Naive thymus-derived CD4-positive, alpha-beta T cell (primary cell): ENCODE measurements at regions of chrX and their contacts with region 1.

Region 1: DNA sequence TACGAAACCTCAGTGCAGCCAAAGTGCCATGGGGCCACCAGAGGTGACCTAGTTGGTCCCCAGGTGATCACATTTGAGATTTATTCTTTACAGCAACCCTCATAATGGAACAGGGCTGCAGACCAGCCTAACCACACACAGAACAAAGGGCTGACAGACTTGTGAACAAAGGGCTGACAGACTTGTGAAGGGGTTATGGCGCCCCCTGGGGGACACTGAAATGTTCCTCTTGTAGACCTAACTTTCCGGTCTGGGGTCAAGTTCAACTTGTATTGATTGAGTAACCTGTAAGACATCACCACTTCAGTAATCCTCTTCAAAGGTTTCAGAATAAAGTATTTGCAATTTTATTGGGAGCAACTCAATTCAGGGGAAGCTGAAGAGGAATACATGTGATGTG is 175.9 kb upstream of the RPS6KA3 start:
- DNase-seq: peak; percentile 59 to 84 (median 77)
- ATAC-seq: peak; percentile 96
- H3K4me3 ChIP-seq: no peak overlapping the region
- H3K4me3 Mint-ChIP-seq: peak overlapping the region in 2 of 10 donors; percentile 1 to 39
- H3K27ac ChIP-seq: no peak overlapping the region
- H3K27ac Mint-ChIP-seq: no peak overlapping the region
- H3K4me1 ChIP-seq: peaks cover 45 to 46% of the 10 kb centered on the region in 2 donors
- H3K4me1 Mint-ChIP-seq: peaks cover 12 to 53% (median 45%) of the 10 kb centered on the region in 7 donors
- H3K27me3 ChIP-seq: no peaks in the 10 kb centered on the region
- H3K27me3 Mint-ChIP-seq: peaks cover 0 to 7% (median 0%) of the 10 kb centered on the region in 5 donors

Region 2: GRCh38 chrX:20141281-20142220 is 301.0 kb before region 1 on chrX and contains the start of gene EIF1AX:
- CTCF ChIA-PET with region 1: no interaction called
- POLR2A ChIA-PET with region 1: no interaction called
- intact Hi-C with region 1: loop called (anchors 5 to 10 kb)
- DNase-seq: peak; percentile 82 to 100 (median 98)
- ATAC-seq: peak; percentile 99
- H3K4me3 ChIP-seq: peak within 1 kb of the TSS; percentile 84
- H3K4me3 Mint-ChIP-seq: peak within 1 kb of the TSS; percentile 80 to 96 (median 88)
- H3K27ac ChIP-seq: peak within 1 kb of the TSS; percentile 93
- H3K27ac Mint-ChIP-seq: peak within 1 kb of the TSS; percentile 68 to 97 (median 89)
- H3K4me1 ChIP-seq: peaks cover 8 to 13% of the 10 kb centered on the region in 2 donors
- H3K4me1 Mint-ChIP-seq: peaks cover 4 to 42% (median 27%) of the 10 kb centered on the region in 7 donors
- H3K27me3 ChIP-seq: no peaks in the 10 kb centered on the region
- H3K27me3 Mint-ChIP-seq: no peaks in the 10 kb centered on the region
- total RNA-seq, gene EIF1AX: 40.2 to 67.5 (median 51.6) TPM

Region 3: DNA sequence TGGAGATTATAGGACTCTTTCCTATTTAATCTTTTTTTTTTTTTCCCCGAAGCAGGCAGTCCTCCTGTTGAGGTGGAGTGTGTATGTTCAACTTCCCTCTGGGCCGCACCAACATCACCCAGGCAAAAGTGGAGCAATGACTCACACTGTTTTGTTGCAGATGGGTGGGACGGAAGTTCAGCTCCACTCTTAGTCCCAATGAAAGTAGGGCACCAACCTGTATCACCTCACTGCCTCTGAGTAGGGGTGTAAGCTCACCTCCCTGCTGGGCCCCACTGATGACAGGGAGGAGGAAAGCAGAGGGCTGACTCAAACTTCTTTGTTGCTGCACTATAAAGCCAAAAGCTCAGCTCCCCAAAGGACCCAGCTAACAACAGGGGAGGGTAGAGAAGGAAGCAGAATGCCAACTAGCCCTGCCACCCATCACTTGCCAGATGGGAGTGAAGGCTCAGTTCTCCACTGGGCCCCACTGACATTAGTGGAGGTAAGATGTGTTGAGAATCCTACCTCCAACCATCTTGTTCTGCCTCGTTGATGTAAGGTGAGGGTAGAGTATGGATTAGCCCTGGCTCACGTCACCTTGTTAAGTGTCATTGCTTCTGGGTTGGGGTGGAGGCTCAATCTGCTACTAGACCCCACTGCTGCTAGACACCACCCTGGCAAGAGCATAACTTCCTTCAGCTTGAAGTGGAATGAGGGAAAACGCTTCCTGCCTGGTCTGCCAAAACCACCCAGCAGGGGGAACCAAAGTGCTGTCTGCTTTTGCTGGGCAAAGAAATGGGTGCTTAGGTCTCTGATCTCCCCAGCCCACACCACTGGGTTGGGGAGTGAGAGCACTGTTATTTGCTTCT is 190.0 kb before region 1 on chrX:
- CTCF ChIA-PET with region 1: interaction called, 5 read pairs
- POLR2A ChIA-PET with region 1: no interaction called
- intact Hi-C with region 1: loop called (anchors 1 kb)
- DNase-seq: peak; percentile 45 to 73 (median 66)
- ATAC-seq: peak; percentile 88
- H3K4me3 ChIP-seq: no peak overlapping the region
- H3K4me3 Mint-ChIP-seq: peak overlapping the region in 1 of 10 donors; percentile 51
- H3K27ac ChIP-seq: no peak overlapping the region
- H3K27ac Mint-ChIP-seq: peak overlapping the region in 5 of 9 donors; percentile 36 to 52 (median 48)
- H3K4me1 ChIP-seq: peaks cover 16 to 31% of the 10 kb centered on the region in 2 donors
- H3K4me1 Mint-ChIP-seq: peaks cover 5 to 64% (median 52%) of the 10 kb centered on the region in 7 donors
- H3K27me3 ChIP-seq: no peaks in the 10 kb centered on the region
- H3K27me3 Mint-ChIP-seq: no peaks in the 10 kb centered on the region

Region 4: GRCh38 chrX:20352935-20353336 is 89.7 kb before region 1 on chrX:
- CTCF ChIA-PET with region 1: no interaction called
- POLR2A ChIA-PET with region 1: no interaction called
- intact Hi-C with region 1: loop called in 1 of 2 experiments (anchors 1 kb)
- DNase-seq: no peak
- ATAC-seq: no peak
- H3K4me3 ChIP-seq: no peak overlapping the region
- H3K4me3 Mint-ChIP-seq: no peak overlapping the region
- H3K27ac ChIP-seq: no peak overlapping the region
- H3K27ac Mint-ChIP-seq: no peak overlapping the region
- H3K4me1 ChIP-seq: peaks cover 0 to 7% of the 10 kb centered on the region in 2 donors
- H3K4me1 Mint-ChIP-seq: peaks cover 0 to 28% (median 20%) of the 10 kb centered on the region in 7 donors
- H3K27me3 ChIP-seq: no peaks in the 10 kb centered on the region
- H3K27me3 Mint-ChIP-seq: peaks cover 0 to 5% (median 0%) of the 10 kb centered on the region in 5 donors

Region 5: GRCh38 chrX:20382518-20383297 is 59.9 kb before region 1 on chrX:
- CTCF ChIA-PET with region 1: no interaction called
- POLR2A ChIA-PET with region 1: no interaction called
- intact Hi-C with region 1: loop called (anchors 1 to 10 kb)
- DNase-seq: no peak
- ATAC-seq: no peak
- H3K4me3 ChIP-seq: no peak overlapping the region
- H3K4me3 Mint-ChIP-seq: peak overlapping the region in 8 of 10 donors; percentile 19 to 74 (median 45)
- H3K27ac ChIP-seq: no peak overlapping the region
- H3K27ac Mint-ChIP-seq: peak overlapping the region in 2 of 9 donors; percentile 6 to 42
- H3K4me1 ChIP-seq: peaks cover 0 to 3% of the 10 kb centered on the region in 2 donors
- H3K4me1 Mint-ChIP-seq: peaks cover 5 to 18% (median 10%) of the 10 kb centered on the region in 7 donors
- H3K27me3 ChIP-seq: no peaks in the 10 kb centered on the region
- H3K27me3 Mint-ChIP-seq: no peaks in the 10 kb centered on the region

Region 6: DNA sequence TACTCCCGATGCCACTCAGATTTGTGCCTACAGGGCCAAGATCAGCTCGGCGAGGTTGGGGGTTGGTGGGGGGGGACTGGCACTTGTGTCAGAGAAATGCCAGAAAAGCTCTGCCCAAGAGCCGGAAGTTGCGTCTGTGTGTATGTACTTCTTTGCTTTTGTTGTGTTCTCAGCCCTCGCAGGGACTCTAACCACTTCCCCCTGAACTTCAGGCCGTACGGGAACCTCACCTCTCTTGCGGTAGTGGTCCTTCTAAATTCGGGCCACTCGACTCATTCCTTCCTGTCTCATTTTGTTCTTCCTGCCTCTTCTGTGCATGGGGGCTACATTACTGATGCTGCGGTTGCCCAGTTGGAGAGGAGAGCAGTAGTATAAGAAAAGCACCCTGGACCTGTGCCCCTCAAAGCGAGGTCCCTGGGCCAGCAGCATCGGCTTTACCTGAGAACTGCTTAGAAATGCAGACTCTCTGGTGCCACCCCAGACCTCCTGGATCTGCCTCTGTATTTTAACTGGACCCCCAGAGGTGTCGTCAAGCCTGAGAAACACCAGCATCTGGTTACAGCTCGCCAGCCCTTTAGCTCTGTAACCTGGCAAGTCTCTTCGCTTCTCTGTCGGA is 29.6 kb before region 1 on chrX:
- CTCF ChIA-PET with region 1: interaction called, 9 read pairs
- POLR2A ChIA-PET with region 1: interaction called, 11 read pairs
- intact Hi-C with region 1: loop called in 1 of 2 experiments (anchors 2 kb)
- DNase-seq: peak; percentile 20 to 80 (median 66)
- ATAC-seq: peak; percentile 93
- H3K4me3 ChIP-seq: peak overlapping the region; percentile 22
- H3K4me3 Mint-ChIP-seq: peak overlapping the region; percentile 55 to 88 (median 72)
- H3K27ac ChIP-seq: peak overlapping the region; percentile 66
- H3K27ac Mint-ChIP-seq: peak overlapping the region; percentile 86 to 98 (median 93)
- H3K4me1 ChIP-seq: peaks cover 22 to 40% of the 10 kb centered on the region in 2 donors
- H3K4me1 Mint-ChIP-seq: peaks cover 13 to 55% (median 46%) of the 10 kb centered on the region in 7 donors
- H3K27me3 ChIP-seq: no peaks in the 10 kb centered on the region
- H3K27me3 Mint-ChIP-seq: peaks cover 0 to 2% (median 0%) of the 10 kb centered on the region in 5 donors

Region 7: DNA sequence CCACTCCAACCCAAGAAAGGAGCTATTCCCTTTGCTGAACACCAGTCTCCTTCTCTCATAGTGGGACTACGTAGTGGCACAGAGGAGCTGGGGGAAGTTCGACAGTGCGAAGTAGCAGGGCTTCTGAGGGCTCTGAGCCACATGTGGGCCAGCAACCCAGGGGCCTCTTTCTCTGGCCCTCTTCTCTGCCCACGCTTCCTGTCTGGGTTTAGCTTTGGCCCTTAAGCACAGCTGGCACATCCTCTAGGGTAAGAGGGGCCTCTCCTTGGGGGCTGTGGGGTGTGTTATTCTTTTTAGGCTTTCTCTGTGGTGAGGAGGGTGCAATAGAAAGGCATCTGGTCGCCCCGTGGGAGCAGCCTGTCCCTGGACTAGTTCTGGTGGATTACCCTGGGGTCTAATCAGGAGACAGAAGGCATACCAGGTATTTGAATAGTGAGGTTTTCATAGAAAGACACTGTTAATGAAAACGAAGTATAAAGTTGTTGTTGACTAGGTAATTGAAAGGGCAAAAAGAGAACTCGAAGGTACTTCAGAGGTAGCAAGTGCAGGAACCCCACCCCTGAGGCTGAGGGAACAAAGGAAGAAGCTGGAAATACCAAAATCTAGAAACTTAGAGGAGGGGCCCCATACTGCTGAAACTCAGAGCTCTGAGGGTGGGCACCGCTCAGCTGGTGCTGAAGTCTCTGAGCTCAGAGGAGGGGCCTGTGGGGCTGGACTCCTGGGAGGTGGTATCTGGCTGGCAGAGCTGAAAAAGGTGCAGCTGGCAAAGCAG is 24.0 kb before region 1 on chrX:
- CTCF ChIA-PET with region 1: interaction called, 9 read pairs
- POLR2A ChIA-PET with region 1: interaction called, 11 read pairs
- intact Hi-C with region 1: loop called (anchors 2 kb)
- DNase-seq: peak in 4 of 9 donors; percentile 8 to 20 (median 15)
- ATAC-seq: peak; percentile 41
- H3K4me3 ChIP-seq: no peak overlapping the region
- H3K4me3 Mint-ChIP-seq: peak overlapping the region; percentile 30 to 77 (median 54)
- H3K27ac ChIP-seq: peak overlapping the region; percentile 61
- H3K27ac Mint-ChIP-seq: peak overlapping the region in 8 of 9 donors; percentile 88 to 96 (median 94)
- H3K4me1 ChIP-seq: peaks cover 24 to 46% of the 10 kb centered on the region in 2 donors
- H3K4me1 Mint-ChIP-seq: peaks cover 20 to 67% (median 48%) of the 10 kb centered on the region in 7 donors
- H3K27me3 ChIP-seq: no peaks in the 10 kb centered on the region
- H3K27me3 Mint-ChIP-seq: no peaks in the 10 kb centered on the region